ENCODE measurements at regions of chr3 and their contacts with region 1.

Region 1: GRCh38 chr3:177597311-177598096 is 400.2 kb upstream of the TBL1XR1 start:
- DNase-seq: peak; percentile 77
- H3K4me3 Mint-ChIP-seq: peak overlapping the region; percentile 77
- H3K27ac Mint-ChIP-seq: peak overlapping the region; percentile 95
- H3K4me1 Mint-ChIP-seq: peaks cover 55% of the 10 kb centered on the region
- H3K27me3 Mint-ChIP-seq: no peaks in the 10 kb centered on the region

Region 2: DNA sequence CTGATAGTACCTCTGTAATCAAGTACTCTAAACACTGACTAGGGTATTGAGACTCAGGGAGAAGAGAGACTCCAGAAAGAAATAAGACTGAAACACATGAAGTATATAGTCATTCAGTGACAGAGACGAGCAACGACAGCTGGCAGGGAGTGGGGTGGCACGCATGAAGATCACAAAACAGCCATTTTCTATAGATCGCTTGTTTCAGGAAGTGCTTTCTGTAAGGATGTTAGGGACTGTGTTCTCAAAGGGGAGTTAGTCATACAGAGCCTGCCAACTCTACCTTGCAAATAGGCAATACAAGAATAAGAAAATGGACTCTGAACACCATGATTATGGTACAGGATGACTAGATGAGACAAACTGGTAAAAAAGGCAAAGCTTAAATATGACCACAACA is 539.7 kb before region 1 on chr3:
- intact Hi-C with region 1: loop called (anchors 5 kb)
- DNase-seq: peak; percentile 76
- H3K4me3 Mint-ChIP-seq: no peak overlapping the region
- H3K27ac Mint-ChIP-seq: no peak overlapping the region
- H3K4me1 Mint-ChIP-seq: peaks cover 19% of the 10 kb centered on the region
- H3K27me3 Mint-ChIP-seq: no peaks in the 10 kb centered on the region

Region 3: GRCh38 chr3:177538750-177539730 is 58.5 kb before region 1 on chr3:
- intact Hi-C with region 1: loop called (anchors 5 kb)
- DNase-seq: peak; percentile 78
- H3K4me3 Mint-ChIP-seq: peak overlapping the region; percentile 74
- H3K27ac Mint-ChIP-seq: peak overlapping the region; percentile 38
- H3K4me1 Mint-ChIP-seq: peaks cover 22% of the 10 kb centered on the region
- H3K27me3 Mint-ChIP-seq: no peaks in the 10 kb centered on the region

Region 4: DNA sequence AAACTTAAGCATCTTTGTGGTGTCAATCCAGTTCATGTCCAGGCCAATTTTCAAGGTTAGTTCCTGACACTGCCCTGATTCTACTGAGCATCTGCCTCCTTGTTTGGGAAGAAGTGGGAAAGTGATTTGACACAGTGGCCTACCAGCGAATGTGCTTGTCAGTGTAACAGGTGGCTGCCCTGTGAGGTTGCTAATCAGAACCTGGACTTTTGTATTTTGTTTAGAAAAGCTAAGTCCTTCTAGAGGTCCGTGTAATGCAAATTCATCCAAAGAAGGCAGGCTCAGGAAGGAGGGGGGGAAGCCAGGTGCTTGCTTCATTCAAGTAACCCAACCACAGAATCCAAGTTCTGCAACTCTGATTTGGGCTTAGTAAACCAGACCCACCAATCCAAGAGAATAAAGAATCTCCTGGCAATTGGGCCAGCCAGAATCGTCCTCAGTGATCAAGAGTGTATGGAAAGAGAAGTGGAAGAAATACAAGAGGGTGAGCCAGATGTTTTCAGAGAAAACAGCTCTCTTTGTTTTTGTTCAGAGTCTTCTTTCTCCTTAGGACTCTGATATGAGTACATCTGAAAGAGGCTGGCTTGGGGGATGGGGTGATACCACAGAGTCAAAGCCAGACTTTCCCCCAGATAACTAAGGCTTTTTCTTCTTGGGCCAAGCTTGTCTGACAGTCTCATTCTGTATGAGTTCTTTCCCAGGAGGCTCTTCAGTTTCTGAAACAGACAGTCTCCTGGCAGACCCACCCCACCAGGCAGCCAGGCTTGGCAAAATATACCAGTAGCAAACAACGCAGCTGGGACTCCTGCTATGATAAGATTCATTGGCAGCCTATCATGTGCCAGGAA is 108.7 kb after region 1 on chr3:
- intact Hi-C with region 1: no loop called
- DNase-seq: no peak
- H3K4me3 Mint-ChIP-seq: no peak overlapping the region
- H3K27ac Mint-ChIP-seq: no peak overlapping the region
- H3K4me1 Mint-ChIP-seq: no peaks in the 10 kb centered on the region
- H3K27me3 Mint-ChIP-seq: no peaks in the 10 kb centered on the region

Region 5: DNA sequence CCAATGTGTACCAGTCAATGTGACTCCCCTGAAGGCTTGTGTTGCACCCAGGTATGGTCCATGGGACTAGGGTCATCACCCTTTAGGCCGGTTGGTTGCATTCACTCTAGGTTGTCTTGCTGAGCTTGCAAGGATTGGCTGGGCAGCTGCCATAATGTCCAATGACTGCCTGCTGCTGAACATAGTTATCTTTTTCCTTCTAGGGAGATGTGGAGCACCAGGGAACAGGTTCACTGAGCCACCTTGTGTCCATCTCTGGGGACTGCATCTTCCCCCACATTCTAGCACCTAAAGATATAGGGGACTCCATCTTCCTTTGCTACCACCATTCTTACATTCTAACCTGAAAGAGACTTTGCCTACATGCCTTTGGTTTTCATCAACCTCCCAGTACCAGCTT is 180.2 kb after region 1 on chr3:
- intact Hi-C with region 1: loop called (anchors 10 kb)
- DNase-seq: peak; percentile 76
- H3K4me3 Mint-ChIP-seq: no peak overlapping the region
- H3K27ac Mint-ChIP-seq: no peak overlapping the region
- H3K4me1 Mint-ChIP-seq: peaks cover 10% of the 10 kb centered on the region
- H3K27me3 Mint-ChIP-seq: no peaks in the 10 kb centered on the region

Region 6: GRCh38 chr3:178140531-178141304 is 543.2 kb after region 1 on chr3:
- intact Hi-C with region 1: no loop called
- DNase-seq: no peak
- H3K4me3 Mint-ChIP-seq: no peak overlapping the region
- H3K27ac Mint-ChIP-seq: no peak overlapping the region
- H3K4me1 Mint-ChIP-seq: no peaks in the 10 kb centered on the region
- H3K27me3 Mint-ChIP-seq: no peaks in the 10 kb centered on the region